Right ventricle myocardium inferior (tissue), 1 donor: ENCODE measurements at regions of chr3 and their contacts with region 1.

Region 1: GRCh38 chr3:45760878-45761711 is 35.2 kb downstream of the SLC6A20 start:
- DNase-seq: no peak
- ATAC-seq: peak; percentile 75

Region 2: GRCh38 chr3:45832691-45833090 is 71.6 kb after region 1 on chr3:
- intact Hi-C with region 1: loop called (anchors 1 kb)
- DNase-seq: no peak
- ATAC-seq: no peak

Region 3: DNA sequence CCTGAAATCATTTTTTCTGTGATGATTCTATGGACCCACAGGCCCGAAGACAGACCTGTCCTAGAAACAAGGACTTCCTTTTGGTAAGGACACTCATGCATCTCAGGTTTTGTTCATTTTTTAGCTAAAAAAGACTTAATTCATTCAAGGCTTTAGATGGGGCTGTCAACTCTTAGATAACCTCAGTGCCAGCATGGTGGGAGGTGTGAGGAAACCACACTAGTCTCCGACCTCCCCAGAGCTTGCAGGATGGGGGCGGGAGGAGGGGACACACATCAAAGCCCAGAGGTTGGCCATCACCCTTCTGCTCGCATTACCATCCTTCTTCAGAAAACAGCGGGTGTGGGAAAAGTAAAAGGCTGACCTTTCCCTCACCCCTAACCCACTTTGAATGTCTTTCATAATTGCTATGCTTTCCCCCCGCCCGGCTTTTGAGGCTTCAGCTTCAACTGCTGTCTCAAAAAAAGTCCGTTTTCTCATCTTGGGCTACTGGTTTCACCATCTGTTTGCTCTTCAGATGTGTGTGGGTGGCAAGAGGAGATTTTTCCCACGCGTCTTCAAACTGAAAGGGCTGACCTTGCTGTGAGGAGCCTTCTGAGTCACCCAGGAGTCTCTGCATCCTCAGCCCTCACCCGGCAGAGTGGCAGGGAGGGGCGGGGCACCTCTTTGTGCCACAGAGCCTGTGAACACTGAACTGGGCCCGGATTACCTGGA is 154.6 kb after region 1 on chr3:
- intact Hi-C with region 1: loop called (anchors 5 kb)
- DNase-seq: no peak
- ATAC-seq: no peak